ENCODE measurements at regions of chr12 and their contacts with region 1.

Region 1: GRCh38 chr12:49866859-49867579 is 24.1 kb upstream of the BCDIN3D start:
- DNase-seq: peak; percentile 69 to 90 (median 87)
- ATAC-seq: peak in 1 of 2 donors; percentile 7
- H3K4me3 ChIP-seq: no peak overlapping the region
- H3K27ac ChIP-seq: no peak overlapping the region
- H3K4me1 ChIP-seq: peaks cover 14% of the 10 kb centered on the region
- H3K27me3 ChIP-seq: no peaks in the 10 kb centered on the region

Region 2: DNA sequence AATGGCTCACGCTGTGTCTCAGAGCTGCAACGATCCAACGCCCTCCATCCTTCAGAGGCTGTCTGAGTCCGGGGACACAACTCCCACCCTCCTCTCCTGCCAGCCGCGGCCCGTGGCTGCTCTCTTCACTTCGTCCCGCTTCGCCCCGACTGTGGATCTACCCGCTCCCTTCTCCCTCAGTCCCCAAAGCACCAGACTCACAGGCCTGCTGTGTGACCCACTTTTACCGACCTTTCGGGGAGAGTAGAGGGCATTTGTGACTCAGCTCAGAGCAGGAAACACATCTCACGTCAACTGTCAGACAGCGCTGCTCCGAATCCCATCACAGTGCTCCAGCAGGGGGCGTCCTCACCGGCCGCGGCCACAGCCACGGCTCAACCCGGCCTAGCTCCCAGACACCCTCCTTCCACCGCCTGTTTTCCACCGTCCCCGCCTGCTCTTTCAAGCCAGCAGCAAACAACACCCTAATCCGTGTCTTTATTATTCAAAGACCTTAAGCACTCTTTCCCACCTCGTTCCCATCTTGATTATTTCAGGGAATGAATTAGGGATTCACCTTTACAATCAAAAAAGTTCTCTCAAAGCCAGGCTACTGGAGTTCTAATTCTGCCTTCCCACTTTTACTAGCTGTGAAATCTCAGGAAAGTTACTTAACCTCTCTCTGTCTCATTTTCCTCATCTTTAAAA is 78.5 kb after region 1 on chr12:
- intact Hi-C with region 1: loop called (anchors 5 to 10 kb)
- DNase-seq: peak; percentile 89 to 95 (median 95)
- ATAC-seq: peak; percentile 93 to 96
- H3K4me3 ChIP-seq: no peak overlapping the region
- H3K27ac ChIP-seq: peak overlapping the region; percentile 26
- H3K4me1 ChIP-seq: no peaks in the 10 kb centered on the region
- H3K27me3 ChIP-seq: no peaks in the 10 kb centered on the region

Region 3: GRCh38 chr12:50055831-50056638 is 189.0 kb after region 1 on chr12:
- intact Hi-C with region 1: loop called (anchors 10 kb)
- DNase-seq: peak in 1 of 3 donors; percentile 74
- ATAC-seq: peak; percentile 30 to 54
- H3K4me3 ChIP-seq: no peak overlapping the region
- H3K27ac ChIP-seq: no peak overlapping the region
- H3K4me1 ChIP-seq: no peaks in the 10 kb centered on the region
- H3K27me3 ChIP-seq: no peaks in the 10 kb centered on the region

Region 4: DNA sequence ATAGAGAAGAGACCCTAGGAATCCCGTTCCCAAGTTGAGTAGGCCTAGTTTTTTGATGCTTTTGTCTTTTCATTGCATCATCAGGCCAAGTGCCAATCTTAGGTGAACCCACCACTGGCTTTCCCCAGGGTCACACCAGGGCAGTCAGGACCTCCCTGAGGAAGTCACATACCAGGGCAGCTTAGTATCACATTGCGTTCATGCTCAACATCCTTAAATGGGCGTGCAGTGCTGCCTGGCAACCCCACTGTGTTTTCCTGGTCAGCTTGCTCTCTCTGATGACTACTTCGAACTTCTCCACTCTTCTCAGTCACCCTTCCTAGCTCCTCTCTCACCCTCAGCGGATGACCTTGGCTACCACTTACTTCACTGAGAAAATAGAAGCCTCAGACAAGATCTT is 199.4 kb after region 1 on chr12:
- intact Hi-C with region 1: loop called in 3 of 4 experiments (anchors 5 to 10 kb)
- DNase-seq: no peak
- ATAC-seq: peak in 1 of 2 donors; percentile 25
- H3K4me3 ChIP-seq: no peak overlapping the region
- H3K27ac ChIP-seq: no peak overlapping the region
- H3K4me1 ChIP-seq: peaks cover 3% of the 10 kb centered on the region
- H3K27me3 ChIP-seq: no peaks in the 10 kb centered on the region

Region 5: DNA sequence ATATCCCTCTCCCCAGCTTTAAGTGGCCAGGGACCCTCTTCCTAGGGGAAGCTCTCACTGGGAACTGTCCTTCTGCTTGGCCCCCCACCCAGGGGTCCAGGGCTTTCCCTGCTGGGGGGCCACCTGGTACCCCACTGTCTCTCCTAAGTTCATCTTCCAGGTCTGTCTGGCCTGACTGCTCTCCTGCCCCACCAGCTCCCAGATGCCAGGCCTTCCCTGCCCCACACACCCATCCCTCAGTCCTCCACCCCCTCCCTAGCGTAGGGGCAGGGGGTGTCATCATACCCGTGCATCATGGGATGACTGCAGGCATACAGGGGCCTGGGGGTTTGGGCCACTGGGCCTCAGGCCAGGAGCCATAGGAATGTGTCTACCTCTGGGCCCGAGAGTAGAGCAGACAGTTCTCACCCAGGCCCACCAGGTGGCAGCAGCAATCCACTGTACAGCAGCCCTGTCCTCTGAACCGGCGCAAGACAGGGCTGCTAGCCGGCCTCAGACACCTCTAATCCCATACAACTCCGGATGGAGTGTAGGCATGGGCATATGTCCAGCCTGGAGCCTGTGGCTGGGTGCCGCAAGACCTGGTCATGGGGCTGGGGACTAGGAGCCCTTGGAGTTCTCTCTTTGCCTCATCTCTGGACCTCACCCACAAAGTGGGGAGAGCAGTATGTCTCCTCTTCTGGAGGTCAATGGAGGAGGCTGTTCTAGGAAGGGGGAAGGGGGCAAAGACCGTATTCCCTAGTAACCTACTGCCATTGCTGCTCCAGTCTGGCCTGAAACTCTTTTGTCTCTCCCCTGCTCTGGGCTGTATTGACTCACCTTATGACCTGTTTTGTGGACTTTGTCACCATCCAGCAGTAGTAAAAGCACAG is 208.2 kb after region 1 on chr12:
- intact Hi-C with region 1: loop called in 1 of 4 experiments (anchors 5 kb)
- DNase-seq: peak; percentile 85 to 93 (median 93)
- ATAC-seq: peak; percentile 83 to 85
- H3K4me3 ChIP-seq: no peak overlapping the region
- H3K27ac ChIP-seq: no peak overlapping the region
- H3K4me1 ChIP-seq: no peaks in the 10 kb centered on the region
- H3K27me3 ChIP-seq: no peaks in the 10 kb centered on the region

Measured in right cardiac atrium (tissue), 5 donors.